SK-N-SH (cell line): ENCODE measurements at regions of chr14 and their contacts with region 1.

Region 1: GRCh38 chr14:64891839-64892375 is 12.2 kb upstream of the SPTB start:
- DNase-seq: peak; percentile 48
- H3K4me3 ChIP-seq: no peak overlapping the region; a peak in 1 of 4 replicates
- H3K27ac ChIP-seq: no peak overlapping the region
- H3K4me1 ChIP-seq: no peaks in the 10 kb centered on the region
- H3K27me3 ChIP-seq: no peaks in the 10 kb centered on the region; the same call in 1 of the 2 replicates
- CTCF ChIP-seq: peak; percentile 77
- EP300 ChIP-seq: no peak
- RAD21 ChIP-seq: peak; percentile 87

Region 2: GRCh38 chr14:64764641-64765520 is 127.0 kb before region 1 on chr14:
- CTCF ChIA-PET with region 1: interaction called, 37 read pairs
- POLR2A ChIA-PET with region 1: interaction called, 8 read pairs
- DNase-seq: peak; percentile 90
- H3K4me3 ChIP-seq: peak overlapping the region; percentile 22 to 56; a peak in 1 of 4 replicates
- H3K27ac ChIP-seq: peak overlapping the region in 1 of 2 experiments; percentile 99; a peak in 2 of 4 replicates
- H3K4me1 ChIP-seq: peaks cover 26 to 56% of the 10 kb centered on the region in 2 experiments
- H3K27me3 ChIP-seq: no peaks in the 10 kb centered on the region
- CTCF ChIP-seq: peak; percentile 81
- EP300 ChIP-seq: no peak
- RAD21 ChIP-seq: peak; percentile 87

Region 3: GRCh38 chr14:64788668-64789067 is 103.2 kb before region 1 on chr14:
- CTCF ChIA-PET with region 1: interaction called, 14 read pairs
- POLR2A ChIA-PET with region 1: no interaction called
- DNase-seq: no peak
- H3K4me3 ChIP-seq: no peak overlapping the region
- H3K27ac ChIP-seq: peak overlapping the region in 1 of 2 experiments; percentile 58; a peak in 2 of 4 replicates
- H3K4me1 ChIP-seq: peaks cover 0 to 6% of the 10 kb centered on the region in 2 experiments; a peak in 1 of 4 replicates
- H3K27me3 ChIP-seq: no peaks in the 10 kb centered on the region
- CTCF ChIP-seq: no peak
- EP300 ChIP-seq: peak in 1 of 2 experiments; percentile 63; a peak in 1 of 4 replicates
- RAD21 ChIP-seq: no peak

Region 4: GRCh38 chr14:64812217-64812811 is 79.6 kb before region 1 on chr14:
- CTCF ChIA-PET with region 1: interaction called, 22 read pairs
- POLR2A ChIA-PET with region 1: no interaction called
- DNase-seq: no peak
- H3K4me3 ChIP-seq: no peak overlapping the region
- H3K27ac ChIP-seq: no peak overlapping the region
- H3K4me1 ChIP-seq: peaks cover 4 to 6% of the 10 kb centered on the region in 2 experiments; a peak in 3 of 4 replicates
- H3K27me3 ChIP-seq: no peaks in the 10 kb centered on the region
- CTCF ChIP-seq: no peak
- EP300 ChIP-seq: no peak
- RAD21 ChIP-seq: no peak

Region 5: GRCh38 chr14:64841121-64841651 is 50.7 kb before region 1 on chr14:
- CTCF ChIA-PET with region 1: interaction called, 20 read pairs
- POLR2A ChIA-PET with region 1: no interaction called
- DNase-seq: no peak
- H3K4me3 ChIP-seq: no peak overlapping the region
- H3K27ac ChIP-seq: no peak overlapping the region
- H3K4me1 ChIP-seq: peaks cover 4 to 5% of the 10 kb centered on the region in 2 experiments; a peak in 3 of 4 replicates
- H3K27me3 ChIP-seq: no peaks in the 10 kb centered on the region
- CTCF ChIP-seq: peak; percentile 66
- EP300 ChIP-seq: no peak
- RAD21 ChIP-seq: no peak